ENCODE measurements at regions of chr1 and their contacts with region 1.

Region 1: DNA sequence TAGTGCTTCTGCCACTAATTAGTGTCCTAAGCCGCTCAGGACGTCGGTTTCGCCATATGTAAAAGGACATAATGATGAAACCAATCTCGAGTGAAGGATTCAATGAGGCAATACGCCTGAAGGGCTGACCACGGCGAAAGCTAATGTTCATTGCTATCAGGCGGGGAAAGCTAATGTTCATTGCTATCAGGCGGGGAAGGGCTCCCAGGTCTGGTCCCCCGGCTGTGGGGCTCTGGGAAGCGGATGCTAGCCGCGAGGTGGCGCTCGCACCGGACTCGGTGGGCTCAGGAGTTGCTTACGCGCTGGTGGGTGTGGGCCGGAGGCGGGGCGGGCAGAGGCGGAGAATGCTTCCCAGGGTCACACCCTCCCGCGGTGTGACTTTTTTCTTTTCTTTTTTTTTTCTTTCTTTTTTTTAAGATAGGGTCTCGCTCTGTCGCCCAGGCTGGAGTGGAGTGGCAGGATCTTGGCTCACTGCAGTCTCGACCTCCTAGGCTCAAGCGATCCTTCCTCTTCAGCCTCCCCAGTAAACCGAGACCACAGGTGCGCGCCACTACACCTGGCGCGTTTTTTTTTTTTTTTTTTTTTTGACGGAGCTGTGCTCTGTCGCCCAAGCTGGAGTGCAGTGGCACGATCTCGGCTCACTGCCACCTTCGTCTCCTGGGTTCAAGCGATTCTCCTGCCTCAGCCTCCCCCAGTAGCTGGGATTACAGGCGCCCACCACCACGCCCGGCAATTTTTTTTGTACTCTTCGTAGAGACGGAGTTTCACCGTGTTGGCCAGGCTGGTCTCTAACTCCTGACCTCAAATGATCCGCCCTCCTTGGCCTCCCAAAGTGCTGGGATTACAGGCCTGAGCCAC is 1.1 kb upstream of the PEAR1 start:
- DNase-seq: peak; percentile 89
- ATAC-seq: peak; percentile 65 to 86
- H3K4me3 ChIP-seq: peak overlapping the region; percentile 19; the same call in 2 of the 3 replicates
- H3K27ac ChIP-seq: peak overlapping the region; percentile 61 to 93; a peak in 5 of 6 replicates
- H3K4me1 ChIP-seq: peaks cover 40% of the 10 kb centered on the region
- CTCF ChIP-seq: peak; percentile 93
- EP300 ChIP-seq: no peak
- POLR2A ChIP-seq: no peak
- RAD21 ChIP-seq: peak; percentile 69 to 83

Region 2: GRCh38 chr1:156659994-156660751 is 232.2 kb before region 1 on chr1:
- CTCF ChIA-PET with region 1: interaction called, 11 read pairs
- POLR2A ChIA-PET with region 1: no interaction called
- DNase-seq: peak; percentile 98
- ATAC-seq: peak; percentile 70 to 83
- H3K4me3 ChIP-seq: peak overlapping the region; percentile 77
- H3K27ac ChIP-seq: peak overlapping the region; percentile 97
- H3K4me1 ChIP-seq: peaks cover 65% of the 10 kb centered on the region
- CTCF ChIP-seq: peak; percentile 99
- EP300 ChIP-seq: peak in 1 of 2 experiments; percentile 62; a peak in 2 of 5 replicates
- POLR2A ChIP-seq: peak; percentile 44; the same call in 1 of the 2 replicates
- RAD21 ChIP-seq: peak; percentile 78 to 91

Region 3: GRCh38 chr1:156813750-156814570 is 78.5 kb before region 1 on chr1:
- CTCF ChIA-PET with region 1: interaction called, 30 read pairs
- POLR2A ChIA-PET with region 1: no interaction called
- DNase-seq: peak; percentile 73
- ATAC-seq: peak; percentile 83 to 91
- H3K4me3 ChIP-seq: peak overlapping the region; percentile 39
- H3K27ac ChIP-seq: peak overlapping the region; percentile 76 to 86
- H3K4me1 ChIP-seq: peaks cover 24% of the 10 kb centered on the region
- CTCF ChIP-seq: peak; percentile 59
- EP300 ChIP-seq: no peak
- POLR2A ChIP-seq: peak; percentile 60
- RAD21 ChIP-seq: peak; percentile 13 to 34; a peak in 2 of 5 replicates

Region 4: GRCh38 chr1:156852418-156852874 is 40.0 kb before region 1 on chr1:
- CTCF ChIA-PET with region 1: interaction called, 61 read pairs
- POLR2A ChIA-PET with region 1: no interaction called
- DNase-seq: peak in 1 of 2 experiments; percentile 27
- ATAC-seq: peak in 1 of 2 experiments; percentile 37; a peak in 3 of 6 replicates
- H3K4me3 ChIP-seq: no peak overlapping the region
- H3K27ac ChIP-seq: no peak overlapping the region
- H3K4me1 ChIP-seq: peaks cover 9% of the 10 kb centered on the region; the same call in 2 of the 3 replicates
- CTCF ChIP-seq: no peak
- EP300 ChIP-seq: no peak
- POLR2A ChIP-seq: no peak
- RAD21 ChIP-seq: no peak

Region 5: GRCh38 chr1:156920233-156921052 is 28.0 kb after region 1 on chr1 and contains the start of gene LRRC71:
- CTCF ChIA-PET with region 1: interaction called, 341 read pairs
- POLR2A ChIA-PET with region 1: interaction called, 3 read pairs
- DNase-seq: peak; percentile 79 to 90
- ATAC-seq: peak; percentile 87 to 97
- H3K4me3 ChIP-seq: peak within 1 kb of the TSS; percentile 29
- H3K27ac ChIP-seq: peak within 1 kb of the TSS; percentile 65 to 86
- H3K4me1 ChIP-seq: peaks cover 10% of the 10 kb centered on the region
- CTCF ChIP-seq: peak; percentile 94
- EP300 ChIP-seq: no peak
- POLR2A ChIP-seq: peak; percentile 20; the same call in 1 of the 2 replicates
- RAD21 ChIP-seq: peak; percentile 89 to 97
- polyA plus RNA-seq, gene LRRC71: 0.15 TPM in 1 of 2 replicates, not detected in the other

Region 6: GRCh38 chr1:156945881-156946661 is 53.7 kb after region 1 on chr1:
- CTCF ChIA-PET with region 1: interaction called, 10 read pairs
- POLR2A ChIA-PET with region 1: no interaction called
- DNase-seq: no peak
- ATAC-seq: no peak
- H3K4me3 ChIP-seq: no peak overlapping the region
- H3K27ac ChIP-seq: no peak overlapping the region
- H3K4me1 ChIP-seq: no peaks in the 10 kb centered on the region
- CTCF ChIP-seq: no peak
- EP300 ChIP-seq: no peak
- POLR2A ChIP-seq: no peak
- RAD21 ChIP-seq: no peak